ENCODE measurements at regions of chr5 and their contacts with region 1.

Region 1: GRCh38 chr5:126354012-126354857 is 69.0 kb upstream of the GRAMD2B start:
- DNase-seq: peak; percentile 66

Region 2: DNA sequence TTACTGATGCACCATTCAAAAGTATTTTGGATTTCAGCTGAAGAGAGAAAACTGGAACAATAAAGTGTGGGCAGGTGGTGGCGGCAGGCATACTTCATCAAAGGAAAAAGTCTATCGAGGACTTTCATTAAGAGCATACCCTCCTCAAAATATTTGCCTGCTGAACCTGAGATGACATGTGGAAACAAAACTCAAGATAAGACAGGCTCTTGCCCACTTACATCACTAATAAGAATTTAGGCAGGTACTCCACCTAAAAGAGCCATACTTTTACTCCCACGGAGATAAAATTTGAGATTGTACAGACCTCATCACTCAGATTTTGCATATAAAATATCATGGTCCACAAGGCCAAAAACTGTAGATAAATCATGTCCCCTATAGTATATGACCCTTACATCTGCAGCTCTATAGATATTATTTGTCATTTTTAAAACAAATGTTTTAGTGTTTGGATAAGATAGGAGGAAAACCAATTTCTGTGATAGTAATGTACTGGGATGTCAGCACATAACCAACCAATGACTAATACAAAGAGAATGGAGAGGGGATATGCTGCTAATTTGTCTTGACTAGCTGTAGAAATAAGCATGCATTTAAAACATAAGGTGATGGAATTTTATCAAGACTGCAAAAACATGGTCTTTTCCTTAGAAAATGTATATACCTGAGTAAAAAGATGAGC is 877.2 kb before region 1 on chr5:
- in situ Hi-C with region 1: no loop called
- DNase-seq: no peak

Region 3: GRCh38 chr5:126263591-126264184 is 90.5 kb before region 1 on chr5:
- in situ Hi-C with region 1: no loop called
- DNase-seq: no peak

Region 4: GRCh38 chr5:126544087-126544740 is 190.0 kb after region 1 on chr5:
- in situ Hi-C with region 1: loop called (anchors 25 kb)
- DNase-seq: no peak

Region 5: GRCh38 chr5:126594676-126595485 is 240.6 kb after region 1 on chr5 and contains the start of gene ALDH7A1:
- in situ Hi-C with region 1: loop called (anchors 10 kb)
- DNase-seq: peak; percentile 90
- total RNA-seq, gene ALDH7A1: 30.1 and 40.1 TPM in 2 replicates

Measured in Caki2 (cell line).